ENCODE measurements at regions of chr7 and their contacts with region 1.

Region 1: DNA sequence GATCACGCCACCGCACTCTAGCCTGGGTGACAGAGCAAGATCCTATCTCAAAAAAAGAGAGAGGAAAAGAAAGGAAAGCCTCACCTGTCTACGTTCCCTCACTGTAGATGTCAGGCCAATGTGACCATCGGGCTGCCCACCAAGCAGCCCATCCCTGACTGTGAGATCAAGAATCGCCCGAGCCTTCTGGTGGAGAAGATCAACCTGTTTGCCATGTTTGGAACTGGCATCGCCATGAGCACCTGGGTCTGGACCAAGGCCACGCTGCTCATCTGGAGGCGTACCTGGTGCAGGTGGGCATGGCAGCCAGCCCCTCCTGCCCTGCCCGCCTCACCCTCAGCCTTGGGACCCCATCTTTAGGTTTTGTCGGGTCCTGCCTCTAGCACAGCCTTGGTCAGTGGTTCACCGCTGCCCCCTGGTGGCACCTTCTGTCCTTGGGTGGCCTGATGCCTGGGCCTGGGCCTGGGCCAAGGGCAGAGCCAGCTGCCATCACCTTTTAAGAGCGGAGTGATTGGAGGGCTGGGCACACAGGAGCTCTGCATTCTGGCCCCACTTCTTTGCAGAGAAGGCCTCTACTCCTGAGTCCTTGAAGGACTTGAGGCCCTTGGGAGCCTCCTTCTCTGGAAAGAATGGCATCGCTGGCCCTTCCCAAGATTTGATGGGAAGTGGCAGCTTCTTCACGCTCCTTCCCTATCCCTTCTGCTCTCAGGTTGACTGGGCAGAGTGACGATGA is 14.4 kb upstream of the AHCYL2 start:
- DNase-seq: peak; percentile 60 to 84
- ATAC-seq: peak; percentile 88 to 95
- H3K4me3 ChIP-seq: no peak overlapping the region
- H3K27ac ChIP-seq: no peak overlapping the region
- H3K4me1 ChIP-seq: no peaks in the 10 kb centered on the region
- CTCF ChIP-seq: peak; percentile 81
- EP300 ChIP-seq: no peak
- POLR2A ChIP-seq: no peak
- RAD21 ChIP-seq: peak; percentile 85 to 87

Region 2: DNA sequence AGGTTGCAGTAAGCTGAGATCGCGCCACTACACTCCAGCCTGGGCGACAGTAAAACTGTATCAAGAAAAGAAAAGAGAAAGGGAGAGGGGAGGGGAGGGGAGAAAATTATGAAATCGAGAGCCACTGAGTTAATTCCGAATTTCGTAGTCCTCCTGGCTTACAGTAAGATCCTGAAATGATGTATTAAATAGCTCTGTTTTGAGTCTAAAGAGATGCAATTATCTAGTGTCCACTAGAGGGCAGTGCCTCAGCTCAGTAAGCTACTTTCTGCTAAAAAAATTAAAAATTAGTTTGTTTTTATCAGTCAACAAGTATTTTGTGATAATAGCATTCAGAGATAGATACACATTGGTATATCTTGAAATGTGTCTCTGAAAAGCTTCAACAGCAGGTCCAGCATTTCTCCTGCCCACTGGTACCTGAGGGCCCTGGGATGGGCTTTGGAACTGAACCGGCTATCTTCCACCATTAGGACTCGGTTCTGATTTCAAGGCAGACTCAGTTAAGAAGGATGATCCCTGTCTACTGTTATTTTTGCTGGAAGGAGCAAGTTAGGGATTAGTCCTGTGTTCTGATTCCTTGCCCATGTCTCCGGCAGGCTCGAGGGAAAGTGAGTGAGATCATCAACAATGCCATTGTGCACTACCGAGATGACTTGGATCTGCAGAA is 46.4 kb before region 1 on chr7:
- CTCF ChIA-PET with region 1: interaction called, 88 read pairs
- POLR2A ChIA-PET with region 1: no interaction called
- DNase-seq: peak; percentile 62 to 66
- ATAC-seq: peak in 1 of 2 experiments; percentile 77; a peak in 3 of 6 replicates
- H3K4me3 ChIP-seq: no peak overlapping the region
- H3K27ac ChIP-seq: no peak overlapping the region
- H3K4me1 ChIP-seq: no peaks in the 10 kb centered on the region
- CTCF ChIP-seq: peak; percentile 89
- EP300 ChIP-seq: no peak
- POLR2A ChIP-seq: no peak
- RAD21 ChIP-seq: peak; percentile 59 to 60; a peak in 4 of 5 replicates

Region 3: GRCh38 chr7:129197771-129198170 is 12.7 kb before region 1 on chr7:
- CTCF ChIA-PET with region 1: interaction called, 25 read pairs
- POLR2A ChIA-PET with region 1: no interaction called
- DNase-seq: no peak
- ATAC-seq: no peak
- H3K4me3 ChIP-seq: no peak overlapping the region
- H3K27ac ChIP-seq: no peak overlapping the region
- H3K4me1 ChIP-seq: no peaks in the 10 kb centered on the region
- CTCF ChIP-seq: no peak
- EP300 ChIP-seq: no peak
- POLR2A ChIP-seq: no peak
- RAD21 ChIP-seq: no peak

Region 4: GRCh38 chr7:129231666-129232065 is 21.2 kb after region 1 on chr7:
- CTCF ChIA-PET with region 1: interaction called, 10 read pairs
- POLR2A ChIA-PET with region 1: no interaction called
- DNase-seq: no peak
- ATAC-seq: no peak
- H3K4me3 ChIP-seq: no peak overlapping the region
- H3K27ac ChIP-seq: no peak overlapping the region
- H3K4me1 ChIP-seq: peaks cover 7% of the 10 kb centered on the region; the same call in 1 of the 3 replicates
- CTCF ChIP-seq: no peak
- EP300 ChIP-seq: no peak
- POLR2A ChIP-seq: no peak
- RAD21 ChIP-seq: no peak

Region 5: GRCh38 chr7:129266181-129266580 is 55.8 kb after region 1 on chr7:
- CTCF ChIA-PET with region 1: no interaction called
- POLR2A ChIA-PET with region 1: no interaction called
- DNase-seq: no peak
- ATAC-seq: no peak
- H3K4me3 ChIP-seq: no peak overlapping the region
- H3K27ac ChIP-seq: no peak overlapping the region
- H3K4me1 ChIP-seq: peaks cover 17% of the 10 kb centered on the region; the same call in 2 of the 3 replicates
- CTCF ChIP-seq: no peak
- EP300 ChIP-seq: no peak
- POLR2A ChIP-seq: no peak
- RAD21 ChIP-seq: no peak

Measured in A549 (cell line).